GM12878 (cell line): ENCODE measurements at regions of chr3 and their contacts with region 1.

Region 1: DNA sequence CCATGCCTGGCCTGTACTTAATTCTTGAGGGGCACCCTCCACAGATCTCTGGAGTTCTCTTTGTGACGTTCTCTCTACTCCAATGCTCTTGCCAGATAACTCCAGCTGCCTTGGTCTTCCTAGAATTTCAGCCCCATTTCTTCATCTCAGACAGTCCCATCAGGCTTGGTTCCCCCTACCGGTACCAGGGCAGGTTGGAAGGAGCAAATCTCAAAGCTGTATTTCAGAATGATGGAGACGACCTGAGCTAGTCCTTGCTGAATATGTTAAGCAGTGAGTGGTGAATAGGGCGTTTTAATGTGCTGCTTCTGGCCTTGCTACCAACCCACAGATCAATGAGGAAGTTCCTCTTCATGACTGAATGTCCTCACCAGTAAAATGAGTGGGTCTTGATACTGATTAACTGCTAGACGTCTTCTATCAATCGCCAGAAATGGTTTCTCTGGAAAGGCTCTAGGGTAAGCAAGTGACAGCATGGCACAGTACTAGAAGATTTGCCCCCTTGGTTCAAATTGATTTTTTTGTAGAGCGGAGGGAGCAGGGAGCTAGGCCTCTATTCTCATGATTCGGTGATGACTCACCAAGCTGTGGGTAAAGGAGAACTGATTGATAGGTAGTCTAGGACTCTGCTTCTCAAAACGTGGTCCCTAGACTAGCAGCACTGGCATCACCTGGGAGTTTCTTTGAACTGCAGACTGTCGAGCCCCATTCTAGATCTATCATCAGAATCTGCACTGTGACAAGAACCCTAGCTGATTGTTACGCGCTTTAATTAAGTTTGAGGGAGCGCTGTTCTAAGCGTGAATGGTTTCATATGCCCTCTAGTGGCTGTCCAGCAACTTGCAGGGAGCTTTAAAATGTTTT is 67.8 kb downstream of the UBP1 start:
- DNase-seq: no peak
- ATAC-seq: peak; percentile 82
- H3K4me3 ChIP-seq: no peak overlapping the region
- H3K27ac ChIP-seq: no peak overlapping the region
- H3K4me1 ChIP-seq: no peaks in the 10 kb centered on the region
- H3K27me3 ChIP-seq: no peaks in the 10 kb centered on the region
- CTCF ChIP-seq: peak; percentile 84 to 95 (median 86)
- EP300 ChIP-seq: no peak
- POLR2A ChIP-seq: no peak
- RAD21 ChIP-seq: peak; percentile 89

Region 2: DNA sequence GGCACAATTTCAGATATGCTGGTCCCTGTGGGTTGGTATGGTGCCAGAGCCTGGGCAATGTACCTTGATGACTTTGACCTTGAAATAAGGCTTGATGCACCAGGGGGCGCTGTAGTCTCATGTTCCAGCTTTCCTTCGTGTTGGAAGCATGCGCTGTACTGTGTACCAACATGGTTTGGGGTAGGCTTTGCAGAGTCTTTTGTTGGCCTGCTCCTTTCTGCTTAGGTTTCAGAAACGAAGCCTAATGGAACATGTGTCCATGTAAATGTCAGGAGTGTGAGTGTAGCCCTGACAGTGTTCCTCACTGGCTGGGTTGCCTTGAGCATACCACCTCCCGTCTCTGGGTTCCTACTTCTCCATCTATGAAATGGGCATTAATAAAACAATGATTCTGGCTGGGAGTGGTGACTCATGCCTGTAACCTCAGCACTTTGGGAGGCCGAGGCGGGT is 424.6 kb before region 1 on chr3:
- CTCF ChIA-PET with region 1: interaction called, 42 read pairs
- POLR2A ChIA-PET with region 1: no interaction called
- RAD21 ChIA-PET with region 1: interaction called, 21 read pairs
- SMC1A ChIA-PET with region 1: interaction called, 20 read pairs
- in situ Hi-C with region 1: loop called (anchors 10 kb)
- intact Hi-C with region 1: loop called (anchors 1 kb)
- DNase-seq: peak; percentile 61
- ATAC-seq: peak; percentile 98
- H3K4me3 ChIP-seq: no peak overlapping the region
- H3K27ac ChIP-seq: no peak overlapping the region
- H3K4me1 ChIP-seq: peaks cover 7% of the 10 kb centered on the region; the same call in 1 of the 2 replicates
- H3K27me3 ChIP-seq: no peaks in the 10 kb centered on the region
- CTCF ChIP-seq: peak; percentile 81 to 95 (median 86)
- EP300 ChIP-seq: no peak
- POLR2A ChIP-seq: no peak
- RAD21 ChIP-seq: peak; percentile 99

Region 3: GRCh38 chr3:33124638-33125037 is 247.8 kb before region 1 on chr3:
- CTCF ChIA-PET with region 1: interaction called, 319 read pairs
- POLR2A ChIA-PET with region 1: interaction called, 11 read pairs
- RAD21 ChIA-PET with region 1: interaction called, 160 read pairs
- SMC1A ChIA-PET with region 1: interaction called, 135 read pairs
- in situ Hi-C with region 1: no loop called
- intact Hi-C with region 1: no loop called
- DNase-seq: no peak
- ATAC-seq: no peak
- H3K4me3 ChIP-seq: no peak overlapping the region
- H3K27ac ChIP-seq: no peak overlapping the region
- H3K4me1 ChIP-seq: no peaks in the 10 kb centered on the region
- H3K27me3 ChIP-seq: no peaks in the 10 kb centered on the region
- CTCF ChIP-seq: no peak
- EP300 ChIP-seq: no peak
- POLR2A ChIP-seq: no peak
- RAD21 ChIP-seq: no peak

Region 4: GRCh38 chr3:33144433-33144832 is 228.0 kb before region 1 on chr3:
- CTCF ChIA-PET with region 1: interaction called, 319 read pairs
- POLR2A ChIA-PET with region 1: no interaction called
- RAD21 ChIA-PET with region 1: interaction called, 9 read pairs
- SMC1A ChIA-PET with region 1: interaction called, 12 read pairs
- in situ Hi-C with region 1: no loop called
- intact Hi-C with region 1: no loop called
- DNase-seq: no peak
- ATAC-seq: peak; percentile 73
- H3K4me3 ChIP-seq: no peak overlapping the region
- H3K27ac ChIP-seq: no peak overlapping the region
- H3K4me1 ChIP-seq: peaks cover 4% of the 10 kb centered on the region; the same call in 1 of the 2 replicates
- H3K27me3 ChIP-seq: no peaks in the 10 kb centered on the region
- CTCF ChIP-seq: peak; percentile 37 to 59 (median 55)
- EP300 ChIP-seq: no peak
- POLR2A ChIP-seq: no peak
- RAD21 ChIP-seq: peak; percentile 27; the same call in 1 of the 2 replicates

Region 5: GRCh38 chr3:33391255-33391995 is 19.0 kb after region 1 on chr3:
- CTCF ChIA-PET with region 1: interaction called, 32 read pairs
- POLR2A ChIA-PET with region 1: no interaction called
- RAD21 ChIA-PET with region 1: interaction called, 6 read pairs
- SMC1A ChIA-PET with region 1: interaction called, 3 read pairs
- in situ Hi-C with region 1: no loop called
- intact Hi-C with region 1: no loop called
- DNase-seq: no peak
- ATAC-seq: no peak
- H3K4me3 ChIP-seq: no peak overlapping the region
- H3K27ac ChIP-seq: no peak overlapping the region; the same call in 1 of the 2 replicates
- H3K4me1 ChIP-seq: no peaks in the 10 kb centered on the region
- H3K27me3 ChIP-seq: no peaks in the 10 kb centered on the region
- CTCF ChIP-seq: no peak
- EP300 ChIP-seq: no peak
- POLR2A ChIP-seq: peak; percentile 21; the same call in 1 of the 2 replicates
- RAD21 ChIP-seq: no peak

Region 6: GRCh38 chr3:33426068-33426467 is 53.6 kb after region 1 on chr3:
- CTCF ChIA-PET with region 1: interaction called, 13 read pairs
- POLR2A ChIA-PET with region 1: no interaction called
- RAD21 ChIA-PET with region 1: no interaction called
- SMC1A ChIA-PET with region 1: no interaction called
- in situ Hi-C with region 1: no loop called
- intact Hi-C with region 1: no loop called
- DNase-seq: no peak
- ATAC-seq: no peak
- H3K4me3 ChIP-seq: no peak overlapping the region
- H3K27ac ChIP-seq: no peak overlapping the region
- H3K4me1 ChIP-seq: peaks cover 22% of the 10 kb centered on the region
- H3K27me3 ChIP-seq: no peaks in the 10 kb centered on the region
- CTCF ChIP-seq: no peak
- EP300 ChIP-seq: no peak
- POLR2A ChIP-seq: no peak
- RAD21 ChIP-seq: no peak

Region 7: DNA sequence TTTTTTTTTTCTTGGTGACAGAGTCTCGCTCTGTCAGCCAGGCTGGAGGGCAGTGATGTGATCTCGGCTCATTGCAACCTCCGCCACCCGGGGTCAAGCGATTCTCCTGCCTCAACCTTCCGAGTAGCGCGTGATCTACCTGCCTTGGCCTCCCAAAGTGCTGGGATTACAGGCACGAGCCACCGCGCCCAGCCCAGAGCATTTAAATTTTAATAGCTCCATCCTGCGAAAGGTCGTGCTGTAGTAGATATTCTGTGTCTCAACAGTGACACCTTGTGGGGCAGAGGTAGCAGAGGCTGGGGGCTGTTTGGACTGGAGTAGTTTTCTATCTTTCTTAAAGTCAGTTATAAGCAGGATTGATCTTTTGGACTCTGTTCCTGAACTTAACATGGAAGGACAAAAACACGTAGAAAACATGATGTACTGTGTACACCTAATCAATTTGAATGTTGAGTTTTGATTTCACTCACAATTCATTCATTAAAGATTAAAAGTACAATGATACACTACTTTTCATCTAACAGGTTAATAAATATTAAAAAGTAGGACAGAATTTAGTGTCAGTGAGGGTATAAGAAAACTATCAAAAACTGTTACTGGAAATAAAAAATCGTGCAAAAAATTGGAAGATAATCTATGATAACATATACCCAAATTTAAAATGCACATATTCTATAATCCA is 415.0 kb after region 1 on chr3:
- CTCF ChIA-PET with region 1: interaction called, 22 read pairs
- POLR2A ChIA-PET with region 1: no interaction called
- RAD21 ChIA-PET with region 1: interaction called, 5 read pairs
- SMC1A ChIA-PET with region 1: interaction called, 17 read pairs
- in situ Hi-C with region 1: no loop called
- intact Hi-C with region 1: no loop called
- DNase-seq: no peak
- ATAC-seq: peak; percentile 93
- H3K4me3 ChIP-seq: peak overlapping the region; percentile 50; the same call in 1 of the 2 replicates
- H3K27ac ChIP-seq: no peak overlapping the region
- H3K4me1 ChIP-seq: peaks cover 4% of the 10 kb centered on the region; the same call in 1 of the 2 replicates
- H3K27me3 ChIP-seq: no peaks in the 10 kb centered on the region
- CTCF ChIP-seq: peak; percentile 75 to 89 (median 83)
- EP300 ChIP-seq: no peak
- POLR2A ChIP-seq: no peak
- RAD21 ChIP-seq: peak; percentile 86